HepG2 (cell line): ENCODE measurements at regions of chr14 and their contacts with region 1.

Region 1: GRCh38 chr14:100815478-100816285 is 10.2 kb upstream of the MEG3 start:
- DNase-seq: peak; percentile 91
- ATAC-seq: peak; percentile 45
- H3K4me3 ChIP-seq: peak overlapping the region in 1 of 3 experiments; percentile 7; a peak in 1 of 6 replicates
- H3K27ac ChIP-seq: peak overlapping the region; percentile 100
- H3K4me1 ChIP-seq: peaks cover 69% of the 10 kb centered on the region
- H3K27me3 ChIP-seq: no peaks in the 10 kb centered on the region
- CTCF ChIP-seq: 0 out of 2 replicates have a peak, but pooled peaks have one; percentile 19
- EP300 ChIP-seq: peak in 1 of 2 experiments; percentile 89; a peak in 2 of 4 replicates
- POLR2A ChIP-seq: no peak; a peak in 1 of 4 replicates
- RAD21 ChIP-seq: no peak

Region 2: DNA sequence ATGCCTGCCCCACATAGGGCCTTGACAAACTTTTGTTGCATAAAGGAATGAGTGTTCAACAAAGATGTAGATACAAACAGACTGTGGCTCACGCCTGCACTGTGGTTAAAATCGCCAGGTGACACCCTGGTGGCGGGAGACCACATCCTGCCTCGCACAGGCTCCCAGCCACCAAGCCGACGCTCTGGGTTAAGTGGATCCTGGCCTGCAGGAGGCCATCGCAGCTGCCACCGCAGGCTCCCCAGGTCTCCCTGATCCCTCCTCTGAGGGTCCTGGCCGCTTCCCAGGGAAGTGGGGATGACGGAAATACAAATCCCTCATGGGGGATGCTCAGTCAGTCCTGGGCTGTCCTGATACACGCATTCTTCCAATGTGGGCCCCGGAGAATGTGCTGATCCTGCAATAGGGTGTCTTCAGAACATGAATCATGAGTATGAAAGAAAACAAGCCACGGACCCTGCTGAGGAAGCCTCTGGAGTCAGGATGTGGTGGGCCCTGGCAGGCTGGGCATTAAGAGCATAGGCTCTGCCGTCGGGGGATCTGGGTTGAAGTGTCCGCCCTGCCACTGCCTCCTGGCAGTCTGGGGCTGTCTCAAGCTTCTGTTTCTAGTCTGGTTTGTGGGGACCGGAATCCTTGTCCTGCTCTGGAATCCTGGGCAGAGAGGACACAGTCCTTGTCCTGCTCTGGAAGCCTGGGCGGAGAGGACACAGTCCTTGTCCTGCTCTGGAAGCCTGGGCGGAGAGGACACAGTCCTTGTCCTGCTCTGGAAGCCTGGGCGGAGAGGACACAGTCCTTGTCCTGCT is 175.0 kb before region 1 on chr14:
- CTCF ChIA-PET with region 1: no interaction called
- POLR2A ChIA-PET with region 1: no interaction called
- in situ Hi-C with region 1: no loop called
- intact Hi-C with region 1: no loop called
- DNase-seq: no peak
- ATAC-seq: peak; percentile 63
- H3K4me3 ChIP-seq: no peak overlapping the region
- H3K27ac ChIP-seq: no peak overlapping the region
- H3K4me1 ChIP-seq: peaks cover 16% of the 10 kb centered on the region
- H3K27me3 ChIP-seq: peaks cover 11 to 23% of the 10 kb centered on the region in 2 experiments; a peak in 4 of 5 replicates
- CTCF ChIP-seq: no peak
- EP300 ChIP-seq: no peak
- POLR2A ChIP-seq: no peak
- RAD21 ChIP-seq: no peak

Region 3: GRCh38 chr14:100654814-100655740 is 160.6 kb before region 1 on chr14:
- CTCF ChIA-PET with region 1: no interaction called
- POLR2A ChIA-PET with region 1: interaction called, 11 read pairs
- in situ Hi-C with region 1: loop called (anchors 10 kb)
- intact Hi-C with region 1: loop called (anchors 10 kb)
- DNase-seq: no peak
- ATAC-seq: peak; percentile 75
- H3K4me3 ChIP-seq: peak overlapping the region; percentile 32 to 71 (median 38); a peak in 4 of 6 replicates
- H3K27ac ChIP-seq: no peak overlapping the region
- H3K4me1 ChIP-seq: peaks cover 60% of the 10 kb centered on the region
- H3K27me3 ChIP-seq: peaks cover 0 to 47% of the 10 kb centered on the region in 2 experiments; a peak in 4 of 5 replicates
- CTCF ChIP-seq: peak; percentile 89
- EP300 ChIP-seq: no peak
- POLR2A ChIP-seq: no peak
- RAD21 ChIP-seq: peak; percentile 85

Region 4: GRCh38 chr14:100677554-100678468 is 137.9 kb before region 1 on chr14:
- CTCF ChIA-PET with region 1: no interaction called
- POLR2A ChIA-PET with region 1: interaction called, 15 read pairs
- in situ Hi-C with region 1: no loop called
- intact Hi-C with region 1: no loop called
- DNase-seq: peak; percentile 80
- ATAC-seq: peak; percentile 31
- H3K4me3 ChIP-seq: no peak overlapping the region; a peak in 1 of 6 replicates
- H3K27ac ChIP-seq: peak overlapping the region; percentile 69
- H3K4me1 ChIP-seq: peaks cover 87% of the 10 kb centered on the region
- H3K27me3 ChIP-seq: no peaks in the 10 kb centered on the region
- CTCF ChIP-seq: peak; percentile 41; the same call in 1 of the 2 replicates
- EP300 ChIP-seq: peak; percentile 53 to 78; a peak in 3 of 4 replicates
- POLR2A ChIP-seq: no peak
- RAD21 ChIP-seq: no peak

Region 5: DNA sequence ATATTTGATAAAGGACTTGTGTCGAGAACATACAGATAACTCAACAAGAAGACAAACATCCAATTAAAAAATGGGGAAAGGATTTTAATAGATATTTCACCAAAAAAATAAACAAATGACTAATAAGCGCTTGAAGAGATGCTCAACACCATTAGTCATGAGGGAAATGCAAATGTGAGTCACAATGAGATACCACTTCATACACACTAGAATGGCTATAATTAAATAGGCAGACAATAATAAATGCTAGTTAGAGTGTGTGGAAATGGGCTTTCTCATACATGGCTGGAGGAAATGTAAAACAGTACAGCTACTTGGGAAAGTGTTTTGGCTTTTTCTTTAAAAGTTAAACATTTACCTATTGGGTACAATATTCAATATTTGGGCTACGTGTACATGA is 54.2 kb before region 1 on chr14:
- CTCF ChIA-PET with region 1: no interaction called
- POLR2A ChIA-PET with region 1: interaction called, 43 read pairs
- in situ Hi-C with region 1: no loop called
- intact Hi-C with region 1: no loop called
- DNase-seq: no peak
- ATAC-seq: no peak
- H3K4me3 ChIP-seq: no peak overlapping the region
- H3K27ac ChIP-seq: peak overlapping the region; percentile 47
- H3K4me1 ChIP-seq: peaks cover 27% of the 10 kb centered on the region
- H3K27me3 ChIP-seq: no peaks in the 10 kb centered on the region
- CTCF ChIP-seq: no peak
- EP300 ChIP-seq: no peak
- POLR2A ChIP-seq: no peak
- RAD21 ChIP-seq: no peak

Region 6: DNA sequence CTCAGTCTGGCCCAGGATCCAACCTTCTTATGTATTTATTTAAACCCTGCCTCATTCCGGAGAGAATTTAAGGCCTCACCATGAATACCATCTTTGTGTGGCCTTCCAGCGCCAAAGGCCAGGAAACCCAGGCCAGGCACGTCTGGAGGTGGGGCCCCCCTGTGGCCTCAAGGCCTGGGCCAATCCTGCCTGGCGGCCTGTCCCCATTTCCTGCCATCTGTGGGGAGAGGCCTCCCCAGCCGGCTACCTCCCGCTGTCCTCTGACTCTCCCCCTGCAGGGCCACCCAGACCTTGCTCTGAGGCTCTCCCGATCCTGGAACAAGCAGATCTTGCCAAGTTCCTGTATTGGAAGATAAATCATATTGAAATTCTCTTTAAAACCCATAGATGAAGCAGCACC is 27.2 kb before region 1 on chr14:
- CTCF ChIA-PET with region 1: no interaction called
- POLR2A ChIA-PET with region 1: interaction called, 10 read pairs
- in situ Hi-C with region 1: no loop called
- intact Hi-C with region 1: no loop called
- DNase-seq: peak; percentile 62
- ATAC-seq: peak; percentile 63
- H3K4me3 ChIP-seq: no peak overlapping the region
- H3K27ac ChIP-seq: peak overlapping the region; percentile 34
- H3K4me1 ChIP-seq: peaks cover 57% of the 10 kb centered on the region
- H3K27me3 ChIP-seq: no peaks in the 10 kb centered on the region
- CTCF ChIP-seq: peak; percentile 53
- EP300 ChIP-seq: no peak
- POLR2A ChIP-seq: no peak
- RAD21 ChIP-seq: no peak

Region 7: GRCh38 chr14:100839681-100840111 is 24.0 kb after region 1 on chr14:
- CTCF ChIA-PET with region 1: no interaction called
- POLR2A ChIA-PET with region 1: interaction called, 12 read pairs
- in situ Hi-C with region 1: no loop called
- intact Hi-C with region 1: no loop called
- DNase-seq: no peak
- ATAC-seq: peak; percentile 21; the same call in 2 of the 3 replicates
- H3K4me3 ChIP-seq: no peak overlapping the region
- H3K27ac ChIP-seq: no peak overlapping the region
- H3K4me1 ChIP-seq: peaks cover 76% of the 10 kb centered on the region
- H3K27me3 ChIP-seq: no peaks in the 10 kb centered on the region
- CTCF ChIP-seq: no peak
- EP300 ChIP-seq: no peak
- POLR2A ChIP-seq: no peak
- RAD21 ChIP-seq: no peak

Region 8: GRCh38 chr14:101235335-101236103 is 419.8 kb after region 1 on chr14:
- CTCF ChIA-PET with region 1: no interaction called
- POLR2A ChIA-PET with region 1: no interaction called
- in situ Hi-C with region 1: no loop called
- intact Hi-C with region 1: no loop called
- DNase-seq: peak; percentile 47
- ATAC-seq: peak; percentile 91
- H3K4me3 ChIP-seq: peak overlapping the region in 1 of 3 experiments; percentile 15; a peak in 1 of 6 replicates
- H3K27ac ChIP-seq: no peak overlapping the region
- H3K4me1 ChIP-seq: peaks cover 77% of the 10 kb centered on the region
- H3K27me3 ChIP-seq: peaks cover 0 to 10% of the 10 kb centered on the region in 2 experiments; a peak in 2 of 5 replicates
- CTCF ChIP-seq: peak; percentile 97
- EP300 ChIP-seq: no peak
- POLR2A ChIP-seq: no peak
- RAD21 ChIP-seq: peak; percentile 96